Testis (tissue), 5 donors: ENCODE measurements at regions of chr6 and their contacts with region 1.

Region 1: GRCh38 chr6:134063966-134064445 is 11.6 kb upstream of the SLC2A12 start:
- DNase-seq: peak; percentile 78
- H3K4me3 ChIP-seq: no peak overlapping the region
- H3K27ac ChIP-seq: no peak overlapping the region
- H3K4me1 ChIP-seq: no peaks in the 10 kb centered on the region
- H3K27me3 ChIP-seq: no peaks in the 10 kb centered on the region
- CTCF ChIP-seq: peak; percentile 50 to 68 (median 68)
- POLR2A ChIP-seq: no peak

Region 2: DNA sequence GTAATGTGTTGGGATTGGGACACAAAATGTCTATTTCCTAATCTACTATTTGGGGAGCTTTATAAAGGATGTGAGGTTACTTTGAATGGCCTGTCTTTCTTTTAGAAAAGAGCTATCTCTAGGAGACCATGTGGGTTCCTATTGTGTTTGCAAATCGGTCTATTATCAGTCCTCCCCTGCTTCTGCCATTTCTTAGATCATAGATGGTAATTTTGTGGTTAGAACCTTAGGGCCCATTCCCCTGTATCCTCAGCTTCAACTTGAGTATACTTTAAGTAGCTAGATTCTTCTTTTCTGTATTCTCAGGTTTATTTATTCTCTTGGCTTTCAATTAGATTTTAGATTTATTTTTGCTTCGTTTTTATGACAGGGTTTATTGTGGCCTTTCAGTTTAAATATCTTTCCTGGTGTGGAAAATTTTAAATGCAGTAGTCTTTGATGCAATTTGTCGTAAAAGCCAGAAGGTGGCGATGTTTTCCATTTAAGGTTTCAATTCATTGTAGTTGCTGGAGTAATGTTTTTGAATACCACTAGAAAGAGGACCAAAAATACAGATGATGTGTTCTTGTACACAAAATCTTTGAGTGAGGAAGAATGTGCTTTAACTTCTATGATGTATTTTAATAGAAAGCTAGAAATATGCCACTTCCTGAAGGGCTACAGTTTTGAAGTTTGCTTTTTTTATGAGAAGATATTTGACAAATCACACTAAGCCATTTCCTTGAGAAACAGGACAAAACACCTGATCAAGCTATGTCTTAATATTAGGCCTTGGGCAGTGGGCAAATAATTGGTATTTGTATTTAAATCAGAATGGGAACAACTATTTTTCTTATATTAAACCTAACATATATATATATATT is 90.7 kb before region 1 on chr6:
- intact Hi-C with region 1: loop called (anchors 10 kb)
- DNase-seq: no peak
- H3K4me3 ChIP-seq: no peak overlapping the region
- H3K27ac ChIP-seq: no peak overlapping the region
- H3K4me1 ChIP-seq: peaks cover 4% of the 10 kb centered on the region
- H3K27me3 ChIP-seq: no peaks in the 10 kb centered on the region
- CTCF ChIP-seq: peak; percentile 56 to 74 (median 61)
- POLR2A ChIP-seq: no peak